ENCODE measurements at regions of chr17 and their contacts with region 1.

Region 1: GRCh38 chr17:72556944-72557826 is 436.4 kb downstream of the SOX9 start:
- DNase-seq: peak in 1 of 2 experiments; percentile 88
- H3K4me3 ChIP-seq: no peak overlapping the region
- H3K27ac ChIP-seq: no peak overlapping the region
- H3K4me1 ChIP-seq: peaks cover 0 to 10% (median 2%) of the 10 kb centered on the region in 4 experiments; a peak in 4 of 7 replicates
- H3K27me3 ChIP-seq: no peaks in the 10 kb centered on the region
- CTCF ChIP-seq: peak; percentile 73 to 99 (median 96)
- EP300 ChIP-seq: no peak; a peak in 1 of 3 replicates
- POLR2A ChIP-seq: no peak
- RAD21 ChIP-seq: peak; percentile 92 to 95

Region 2: DNA sequence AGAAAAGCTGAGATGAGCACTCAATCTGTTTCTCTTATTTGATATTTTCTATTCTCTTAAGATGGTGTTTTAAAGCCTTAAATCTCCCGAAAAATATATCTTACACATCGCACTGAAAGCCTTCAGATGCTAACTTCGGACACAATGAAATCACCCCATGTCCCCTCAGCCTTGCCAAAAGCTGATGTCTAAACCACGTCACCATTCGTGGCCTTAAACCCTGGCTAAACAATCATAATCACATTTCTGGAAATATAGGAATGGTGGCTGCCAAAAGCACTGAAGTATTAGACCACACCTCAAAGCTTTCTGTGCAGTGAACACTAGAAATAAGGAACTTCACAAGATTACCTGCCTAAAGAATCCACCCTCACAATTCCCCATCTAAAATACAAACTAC is 33.7 kb before region 1 on chr17:
- CTCF ChIA-PET with region 1: no interaction called
- POLR2A ChIA-PET with region 1: no interaction called
- DNase-seq: no peak
- H3K4me3 ChIP-seq: no peak overlapping the region
- H3K27ac ChIP-seq: no peak overlapping the region
- H3K4me1 ChIP-seq: peaks cover 0 to 9% (median 4%) of the 10 kb centered on the region in 4 experiments; a peak in 5 of 7 replicates
- H3K27me3 ChIP-seq: no peaks in the 10 kb centered on the region
- CTCF ChIP-seq: no peak
- EP300 ChIP-seq: no peak
- POLR2A ChIP-seq: no peak
- RAD21 ChIP-seq: no peak

Region 3: GRCh38 chr17:72569148-72569946 is 12.2 kb after region 1 on chr17:
- CTCF ChIA-PET with region 1: interaction called, 17 read pairs
- POLR2A ChIA-PET with region 1: no interaction called
- DNase-seq: no peak
- H3K4me3 ChIP-seq: no peak overlapping the region; a peak in 1 of 8 replicates
- H3K27ac ChIP-seq: no peak overlapping the region
- H3K4me1 ChIP-seq: peaks cover 0 to 2% (median 0%) of the 10 kb centered on the region in 4 experiments; a peak in 2 of 7 replicates
- H3K27me3 ChIP-seq: no peaks in the 10 kb centered on the region
- CTCF ChIP-seq: no peak
- EP300 ChIP-seq: no peak
- POLR2A ChIP-seq: no peak
- RAD21 ChIP-seq: no peak

Region 4: GRCh38 chr17:72602517-72603419 is 45.6 kb after region 1 on chr17:
- CTCF ChIA-PET with region 1: interaction called, 13 read pairs
- POLR2A ChIA-PET with region 1: no interaction called
- DNase-seq: peak; percentile 38 to 53
- H3K4me3 ChIP-seq: peak overlapping the region in 1 of 4 experiments; percentile 36; a peak in 2 of 8 replicates
- H3K27ac ChIP-seq: no peak overlapping the region
- H3K4me1 ChIP-seq: peaks cover 4 to 11% (median 7%) of the 10 kb centered on the region in 4 experiments; a peak in 5 of 7 replicates
- H3K27me3 ChIP-seq: no peaks in the 10 kb centered on the region
- CTCF ChIP-seq: peak; percentile 30 to 70 (median 36)
- EP300 ChIP-seq: no peak
- POLR2A ChIP-seq: no peak
- RAD21 ChIP-seq: peak; percentile 10 to 16; a peak in 2 of 4 replicates

Region 5: DNA sequence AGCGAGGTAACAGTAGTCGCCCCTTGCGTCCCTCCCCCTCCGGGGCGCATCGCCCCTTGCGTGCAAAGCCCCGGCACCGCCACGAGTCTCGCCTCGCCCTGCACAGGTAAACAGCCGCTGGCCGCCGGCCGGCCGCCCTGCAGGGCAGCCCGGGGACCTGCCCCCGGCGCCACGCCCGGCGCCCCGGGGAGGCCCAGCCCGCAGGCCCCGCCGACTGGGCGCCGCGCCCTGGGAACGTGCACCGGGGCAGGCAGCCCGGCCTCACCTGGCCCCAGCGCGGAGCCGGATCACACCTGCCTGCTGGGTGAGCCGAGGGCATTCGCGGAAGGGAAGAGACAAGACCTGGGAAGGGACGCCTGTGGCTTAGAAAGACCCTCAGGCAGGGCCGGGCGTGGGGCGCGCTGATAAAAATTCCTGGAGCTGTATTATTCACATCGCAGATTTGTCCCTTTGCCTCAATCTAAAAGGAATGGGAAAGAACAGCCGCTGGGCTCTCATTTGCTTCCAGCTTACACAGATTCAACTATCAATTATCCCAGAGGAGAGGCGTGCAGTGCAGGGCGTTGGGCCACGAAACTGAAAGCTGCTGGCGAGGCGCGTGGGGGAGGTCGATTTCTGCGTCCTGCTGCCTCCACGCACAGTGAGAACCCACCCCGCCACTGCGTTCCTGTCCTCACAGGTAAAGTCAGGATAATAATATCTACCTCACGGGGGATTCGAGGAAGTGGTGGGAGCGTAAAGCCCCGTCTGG is 83.4 kb after region 1 on chr17:
- CTCF ChIA-PET with region 1: interaction called, 21 read pairs
- POLR2A ChIA-PET with region 1: no interaction called
- DNase-seq: no peak
- H3K4me3 ChIP-seq: no peak overlapping the region
- H3K27ac ChIP-seq: no peak overlapping the region
- H3K4me1 ChIP-seq: no peaks in the 10 kb centered on the region
- H3K27me3 ChIP-seq: no peaks in the 10 kb centered on the region
- CTCF ChIP-seq: no peak
- EP300 ChIP-seq: no peak
- POLR2A ChIP-seq: no peak
- RAD21 ChIP-seq: no peak

Region 6: GRCh38 chr17:72683506-72684404 is 126.6 kb after region 1 on chr17:
- CTCF ChIA-PET with region 1: interaction called, 26 read pairs
- POLR2A ChIA-PET with region 1: no interaction called
- DNase-seq: no peak
- H3K4me3 ChIP-seq: no peak overlapping the region
- H3K27ac ChIP-seq: no peak overlapping the region
- H3K4me1 ChIP-seq: 0 out of 7 replicates have a peak, but pooled peaks cover 0 to 3% (median 0%) of the 10 kb centered on the region in 4 experiments
- H3K27me3 ChIP-seq: no peaks in the 10 kb centered on the region
- CTCF ChIP-seq: no peak
- EP300 ChIP-seq: no peak
- POLR2A ChIP-seq: no peak
- RAD21 ChIP-seq: no peak

Region 7: GRCh38 chr17:72715906-72716572 is 158.9 kb after region 1 on chr17:
- CTCF ChIA-PET with region 1: interaction called, 71 read pairs
- POLR2A ChIA-PET with region 1: no interaction called
- DNase-seq: no peak
- H3K4me3 ChIP-seq: no peak overlapping the region
- H3K27ac ChIP-seq: no peak overlapping the region
- H3K4me1 ChIP-seq: peaks cover 0 to 11% (median 2%) of the 10 kb centered on the region in 4 experiments; a peak in 4 of 7 replicates
- H3K27me3 ChIP-seq: no peaks in the 10 kb centered on the region
- CTCF ChIP-seq: no peak
- EP300 ChIP-seq: no peak
- POLR2A ChIP-seq: no peak
- RAD21 ChIP-seq: no peak

Region 8: DNA sequence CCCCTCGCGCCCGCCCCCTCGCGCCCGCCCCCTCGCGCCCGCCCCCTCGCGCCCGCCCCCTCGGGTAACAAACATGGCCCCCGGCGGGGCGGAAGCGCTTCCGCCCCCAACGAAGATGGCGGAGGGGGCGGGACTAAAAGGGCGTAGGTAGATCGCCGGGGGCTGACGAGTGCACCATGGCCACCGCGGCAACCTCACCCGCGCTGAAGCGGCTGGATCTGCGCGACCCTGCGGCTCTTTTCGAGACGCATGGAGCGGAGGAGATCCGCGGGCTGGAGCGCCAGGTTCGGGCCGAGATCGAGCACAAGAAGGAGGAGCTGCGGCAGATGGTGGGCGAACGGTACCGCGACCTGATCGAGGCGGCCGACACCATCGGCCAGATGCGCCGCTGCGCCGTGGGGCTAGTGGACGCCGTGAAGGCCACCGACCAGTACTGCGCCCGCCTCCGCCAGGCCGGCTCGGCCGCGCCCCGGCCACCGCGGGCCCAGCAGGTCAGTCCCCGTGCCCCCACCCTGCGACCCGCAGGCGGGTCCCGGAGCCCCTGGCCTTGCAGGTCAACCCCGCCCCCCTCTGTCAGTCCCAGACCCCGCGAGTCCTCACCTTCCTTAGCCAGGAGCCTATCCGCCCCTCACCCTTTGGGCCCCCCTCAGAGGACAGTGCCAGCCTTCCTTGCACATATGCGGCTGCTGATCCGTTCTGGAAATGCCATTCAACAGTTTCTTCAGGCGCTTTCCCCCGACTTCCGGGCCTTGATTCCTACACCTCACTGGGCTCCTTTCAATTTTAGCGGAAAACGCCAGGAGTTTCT is 635.9 kb after region 1 on chr17 and contains the start of gene COG1:
- CTCF ChIA-PET with region 1: interaction called, 14 read pairs
- POLR2A ChIA-PET with region 1: interaction called, 5 read pairs
- DNase-seq: peak in 1 of 2 experiments; percentile 80
- H3K4me3 ChIP-seq: peak within 1 kb of the TSS; percentile 87 to 95 (median 95)
- H3K27ac ChIP-seq: peak within 1 kb of the TSS; percentile 86
- H3K4me1 ChIP-seq: peaks cover 0 to 8% (median 2%) of the 10 kb centered on the region in 4 experiments; a peak in 2 of 7 replicates
- H3K27me3 ChIP-seq: no peaks in the 10 kb centered on the region
- CTCF ChIP-seq: no peak; a peak in 1 of 4 replicates
- EP300 ChIP-seq: no peak
- POLR2A ChIP-seq: peak in 1 of 2 experiments; percentile 41; a peak in 1 of 3 replicates
- RAD21 ChIP-seq: no peak
- total RNA-seq, gene COG1: 18.7 and 19.5 TPM in 2 replicates

Measured in H1 (cell line).